Pancreas (tissue), 10 donors: ENCODE measurements at regions of chr1 and their contacts with region 1.

Region 1: GRCh38 chr1:157580179-157580827 is 17.6 kb downstream of the FCRL4 start:
- DNase-seq: peak in 2 of 6 donors; percentile 11 to 43
- ATAC-seq: peak; percentile 77 to 91 (median 84)
- H3K4me3 ChIP-seq: no peak overlapping the region
- H3K27ac ChIP-seq: no peak overlapping the region
- H3K4me1 ChIP-seq: no peaks in the 10 kb centered on the region
- H3K27me3 ChIP-seq: no peaks in the 10 kb centered on the region
- CTCF ChIP-seq: peak; percentile 34 to 73 (median 58)

Region 2: GRCh38 chr1:157691285-157691920 is 111.1 kb after region 1 on chr1:
- intact Hi-C with region 1: loop called in 1 of 3 experiments (anchors 10 kb)
- DNase-seq: peak in 1 of 6 donors; percentile 12
- ATAC-seq: peak; percentile 50 to 84 (median 68)
- H3K4me3 ChIP-seq: no peak overlapping the region
- H3K27ac ChIP-seq: no peak overlapping the region
- H3K4me1 ChIP-seq: no peaks in the 10 kb centered on the region
- H3K27me3 ChIP-seq: no peaks in the 10 kb centered on the region
- CTCF ChIP-seq: peak in 3 of 4 donors; percentile 12 to 27 (median 24)

Region 3: DNA sequence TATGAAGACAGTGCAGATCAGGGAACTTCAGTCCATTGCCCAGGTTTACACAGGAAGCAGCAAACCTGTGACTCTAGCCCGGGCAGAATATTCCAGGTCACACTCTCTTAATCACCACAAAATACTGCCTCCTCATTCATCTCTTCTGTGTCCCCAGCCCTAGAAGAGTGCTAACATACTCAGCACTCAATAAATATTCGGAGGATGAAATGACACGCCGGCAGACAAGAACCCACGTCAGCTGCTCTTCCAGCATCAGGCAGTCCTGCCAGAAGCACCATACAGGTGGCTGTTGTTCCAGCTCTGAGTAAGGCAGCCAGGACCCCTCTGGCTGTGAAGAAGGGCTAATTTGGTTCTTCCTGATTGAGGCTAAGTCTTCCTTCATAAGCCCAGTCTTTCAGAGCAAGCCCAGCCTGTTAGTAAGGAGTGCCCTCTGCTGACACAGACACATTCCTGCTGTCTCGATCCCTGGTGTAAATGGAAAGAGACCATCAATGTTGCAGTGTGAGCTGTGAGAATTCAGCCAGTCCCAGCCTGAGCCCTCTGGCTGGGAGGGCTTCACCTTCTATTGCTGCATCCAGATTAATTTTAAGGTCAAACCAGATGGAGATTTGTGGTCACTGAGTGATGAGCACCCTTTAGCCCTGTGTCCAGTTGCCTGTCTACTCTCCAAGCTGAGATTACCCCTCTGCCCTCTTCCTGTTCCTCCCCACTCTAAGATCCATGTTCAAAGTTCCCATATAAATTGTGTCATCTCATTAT is 368.2 kb after region 1 on chr1:
- intact Hi-C with region 1: loop called in 1 of 3 experiments (anchors 10 kb)
- DNase-seq: no peak
- ATAC-seq: peak in 3 of 4 donors; percentile 39 to 81 (median 72)
- H3K4me3 ChIP-seq: no peak overlapping the region
- H3K27ac ChIP-seq: no peak overlapping the region
- H3K4me1 ChIP-seq: peaks cover 0 to 6% (median 4%) of the 10 kb centered on the region in 3 donors
- H3K27me3 ChIP-seq: no peaks in the 10 kb centered on the region
- CTCF ChIP-seq: peak in 2 of 4 donors; percentile 12 to 14